ENCODE measurements at regions of chr12 and their contacts with region 1.

Region 1: GRCh38 chr12:109637348-109637747 is 63.8 kb downstream of the MVK start:
- DNase-seq: no peak
- ATAC-seq: no peak
- H3K4me3 ChIP-seq: no peak overlapping the region
- H3K27ac ChIP-seq: no peak overlapping the region
- H3K4me1 ChIP-seq: no peaks in the 10 kb centered on the region
- H3K27me3 ChIP-seq: no peaks in the 10 kb centered on the region
- CTCF ChIP-seq: no peak

Region 2: GRCh38 chr12:109795023-109795422 is 157.7 kb after region 1 on chr12:
- CTCF ChIA-PET with region 1: interaction called, 11 read pairs
- POLR2A ChIA-PET with region 1: no interaction called
- in situ Hi-C with region 1: no loop called
- intact Hi-C with region 1: no loop called
- DNase-seq: no peak
- ATAC-seq: no peak
- H3K4me3 ChIP-seq: no peak overlapping the region
- H3K27ac ChIP-seq: no peak overlapping the region
- H3K4me1 ChIP-seq: no peaks in the 10 kb centered on the region
- H3K27me3 ChIP-seq: no peaks in the 10 kb centered on the region; the same call in none of the 2 replicates
- CTCF ChIP-seq: no peak

Region 3: DNA sequence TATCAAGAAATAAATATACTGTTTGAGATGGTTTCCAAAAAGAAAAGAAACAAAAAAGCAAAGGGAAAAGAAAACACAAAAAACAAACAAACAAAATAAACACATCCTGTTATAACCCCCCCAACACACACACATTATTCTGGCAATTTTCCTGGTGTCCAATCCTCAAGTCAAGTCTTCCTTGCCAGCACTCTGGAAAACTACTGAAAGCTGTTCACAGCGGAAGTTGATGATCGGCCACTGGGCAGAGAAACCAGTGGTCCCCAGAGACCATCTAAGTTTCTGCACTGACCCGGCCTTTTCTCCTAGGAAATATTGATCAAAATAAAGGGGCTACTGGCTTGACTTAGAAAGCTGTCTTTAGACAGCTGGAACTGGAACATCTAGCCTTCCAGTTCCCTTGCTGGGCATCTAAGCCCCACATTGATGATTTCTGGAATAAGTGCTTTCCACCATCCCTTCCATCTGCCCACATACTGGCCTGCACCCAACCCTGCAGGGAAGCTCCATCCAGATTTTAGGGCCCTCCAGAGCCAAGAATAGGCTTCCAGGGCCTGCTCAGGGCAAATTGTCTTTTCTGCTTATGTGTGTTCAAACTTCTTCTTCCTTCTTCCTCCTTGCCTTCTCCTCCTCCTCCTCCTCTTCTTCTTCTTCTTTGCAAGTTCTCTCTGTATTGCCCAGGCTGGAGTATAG is 1116.9 kb after region 1 on chr12:
- CTCF ChIA-PET with region 1: no interaction called
- POLR2A ChIA-PET with region 1: no interaction called
- in situ Hi-C with region 1: no loop called
- intact Hi-C with region 1: no loop called
- DNase-seq: no peak
- ATAC-seq: no peak
- H3K4me3 ChIP-seq: no peak overlapping the region
- H3K27ac ChIP-seq: no peak overlapping the region
- H3K4me1 ChIP-seq: no peaks in the 10 kb centered on the region
- H3K27me3 ChIP-seq: no peaks in the 10 kb centered on the region
- CTCF ChIP-seq: no peak